Ovary (tissue), 10 donors: ENCODE measurements at regions of chr18 and their contacts with region 1.

Region 1: GRCh38 chr18:34880882-34881834 is 160.1 kb upstream of the MAPRE2 start:
- DNase-seq: no peak
- H3K4me3 ChIP-seq: no peak overlapping the region
- H3K27ac ChIP-seq: no peak overlapping the region
- H3K4me1 ChIP-seq: peaks cover 2% of the 10 kb centered on the region
- H3K27me3 ChIP-seq: no peaks in the 10 kb centered on the region
- CTCF ChIP-seq: no peak
- EP300 ChIP-seq: no peak
- POLR2A ChIP-seq: no peak

Region 2: GRCh38 chr18:34976899-34977837 is 96.0 kb after region 1 on chr18:
- intact Hi-C with region 1: loop called in 1 of 4 experiments (anchors 10 kb)
- DNase-seq: peak; percentile 42 to 63 (median 58)
- H3K4me3 ChIP-seq: peak overlapping the region; percentile 53
- H3K27ac ChIP-seq: no peak overlapping the region
- H3K4me1 ChIP-seq: peaks cover 2% of the 10 kb centered on the region
- H3K27me3 ChIP-seq: no peaks in the 10 kb centered on the region
- CTCF ChIP-seq: no peak
- EP300 ChIP-seq: no peak
- POLR2A ChIP-seq: no peak